Activated CD8-positive, alpha-beta T cell treated with anti-CD3 and anti-CD28 coated beads for 36 hours (primary cell): ENCODE measurements at regions of chr6 and their contacts with region 1.

Region 1: GRCh38 chr6:134174672-134175198 is 122.3 kb upstream of the SLC2A12 start:
- DNase-seq: peak; percentile 94
- ATAC-seq: peak; percentile 81
- H3K4me3 Mint-ChIP-seq: peak overlapping the region; percentile 98
- H3K27ac Mint-ChIP-seq: peak overlapping the region; percentile 98
- H3K4me1 Mint-ChIP-seq: peaks cover 64% of the 10 kb centered on the region
- H3K27me3 Mint-ChIP-seq: no peaks in the 10 kb centered on the region
- CTCF ChIP-seq: no peak

Region 2: DNA sequence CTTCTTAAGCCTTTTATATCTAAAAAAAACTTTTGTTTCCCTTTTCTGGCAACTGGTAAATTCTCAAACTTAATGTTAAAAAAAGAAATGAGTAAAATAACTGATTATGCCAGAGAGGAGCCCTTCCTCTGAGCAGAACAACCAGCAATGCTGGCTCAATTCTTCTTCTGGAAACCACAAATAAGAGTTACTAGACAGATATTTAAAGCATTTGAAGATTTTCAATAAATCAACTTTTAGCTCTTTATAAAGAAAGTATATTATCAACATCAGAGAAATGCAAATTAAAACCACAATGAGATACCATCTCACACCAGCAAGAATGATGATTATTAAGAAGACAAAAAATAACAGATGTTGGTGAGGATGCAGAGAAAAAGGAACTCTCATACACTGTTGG is 347.0 kb before region 1 on chr6:
- CTCF ChIA-PET with region 1: no interaction called
- POLR2A ChIA-PET with region 1: no interaction called
- intact Hi-C with region 1: no loop called
- DNase-seq: no peak
- ATAC-seq: no peak
- H3K4me3 Mint-ChIP-seq: no peak overlapping the region
- H3K27ac Mint-ChIP-seq: no peak overlapping the region
- H3K4me1 Mint-ChIP-seq: no peaks in the 10 kb centered on the region
- H3K27me3 Mint-ChIP-seq: peaks cover 17% of the 10 kb centered on the region
- CTCF ChIP-seq: no peak

Region 3: GRCh38 chr6:134195164-134195906 is 20.6 kb after region 1 on chr6:
- CTCF ChIA-PET with region 1: interaction called, 21 read pairs
- POLR2A ChIA-PET with region 1: no interaction called
- intact Hi-C with region 1: no loop called
- DNase-seq: no peak
- ATAC-seq: no peak
- H3K4me3 Mint-ChIP-seq: no peak overlapping the region
- H3K27ac Mint-ChIP-seq: no peak overlapping the region
- H3K4me1 Mint-ChIP-seq: peaks cover 18% of the 10 kb centered on the region
- H3K27me3 Mint-ChIP-seq: no peaks in the 10 kb centered on the region
- CTCF ChIP-seq: no peak

Region 4: DNA sequence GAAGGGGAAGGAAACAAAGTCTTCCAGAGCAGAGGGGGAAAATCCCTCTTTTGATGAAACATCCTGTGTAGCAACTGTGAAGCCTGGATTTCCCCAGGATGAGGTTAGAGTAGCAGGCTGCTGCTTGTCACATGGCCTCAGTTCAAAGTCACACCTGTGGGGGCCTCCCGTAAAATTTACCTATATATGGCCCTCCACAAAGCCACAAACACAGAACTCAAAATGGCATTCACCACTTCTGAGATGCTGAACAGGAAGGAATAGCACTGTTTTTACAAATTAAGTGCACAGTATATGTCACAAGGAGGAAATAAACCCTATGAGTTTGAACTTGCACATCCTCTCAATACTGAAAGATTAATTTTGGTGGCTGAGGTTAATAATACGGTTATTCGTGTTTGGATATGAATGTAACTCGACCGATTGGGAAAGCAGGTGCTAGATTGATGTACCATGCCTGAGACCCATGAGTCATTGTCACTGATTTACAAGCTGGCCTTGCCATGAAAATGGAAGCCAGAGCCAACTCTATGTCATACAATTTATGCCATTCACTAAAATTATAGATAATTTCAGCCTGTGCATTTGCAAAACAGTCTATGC is 72.6 kb after region 1 on chr6:
- CTCF ChIA-PET with region 1: interaction called, 5 read pairs
- POLR2A ChIA-PET with region 1: interaction called, 8 read pairs
- intact Hi-C with region 1: loop called (anchors 2 kb)
- DNase-seq: peak; percentile 92
- ATAC-seq: peak; percentile 88
- H3K4me3 Mint-ChIP-seq: no peak overlapping the region
- H3K27ac Mint-ChIP-seq: peak overlapping the region; percentile 97
- H3K4me1 Mint-ChIP-seq: peaks cover 56% of the 10 kb centered on the region
- H3K27me3 Mint-ChIP-seq: no peaks in the 10 kb centered on the region
- CTCF ChIP-seq: no peak

Region 5: DNA sequence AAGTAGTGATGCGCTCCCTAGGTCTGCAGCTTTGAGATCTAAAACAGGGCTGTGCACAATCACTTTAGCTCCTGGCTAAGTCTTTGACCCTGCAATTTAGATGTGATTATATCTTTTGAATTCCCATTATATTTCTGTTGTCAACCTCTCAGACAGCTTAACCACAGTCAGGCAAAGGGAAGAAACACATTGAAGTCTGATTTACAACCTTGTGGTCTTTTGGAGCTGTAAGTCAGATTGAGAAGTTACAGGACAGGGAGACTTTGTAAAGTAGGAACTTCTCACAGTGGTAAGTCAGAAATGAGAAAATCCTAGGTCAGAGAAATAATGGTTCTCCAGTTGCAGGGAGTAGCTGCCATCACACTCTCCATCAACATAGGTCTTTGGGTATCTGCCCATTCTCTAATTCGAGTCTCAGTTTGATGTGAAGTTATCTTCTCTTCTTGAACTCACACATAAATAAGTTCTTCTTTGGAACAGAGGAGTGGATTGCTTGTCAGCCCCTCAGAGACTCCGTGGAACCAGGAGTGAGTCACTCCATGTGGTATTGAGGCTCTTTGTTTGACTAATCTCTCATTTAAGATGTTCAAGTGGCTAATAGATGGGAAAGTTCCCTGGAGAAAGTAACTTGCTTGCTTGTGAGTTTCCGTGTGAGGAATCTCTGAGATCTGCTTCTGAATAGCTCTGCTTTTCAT is 178.2 kb after region 1 on chr6:
- CTCF ChIA-PET with region 1: interaction called, 11 read pairs
- POLR2A ChIA-PET with region 1: interaction called, 6 read pairs
- intact Hi-C with region 1: loop called (anchors 10 kb)
- DNase-seq: peak; percentile 48
- ATAC-seq: peak; percentile 74
- H3K4me3 Mint-ChIP-seq: no peak overlapping the region
- H3K27ac Mint-ChIP-seq: no peak overlapping the region
- H3K4me1 Mint-ChIP-seq: peaks cover 28% of the 10 kb centered on the region
- H3K27me3 Mint-ChIP-seq: no peaks in the 10 kb centered on the region
- CTCF ChIP-seq: no peak

Region 6: GRCh38 chr6:134529921-134530320 is 355.2 kb after region 1 on chr6:
- CTCF ChIA-PET with region 1: interaction called, 3 read pairs
- POLR2A ChIA-PET with region 1: no interaction called
- intact Hi-C with region 1: loop called (anchors 10 kb)
- DNase-seq: no peak
- ATAC-seq: no peak
- H3K4me3 Mint-ChIP-seq: no peak overlapping the region
- H3K27ac Mint-ChIP-seq: no peak overlapping the region
- H3K4me1 Mint-ChIP-seq: peaks cover 29% of the 10 kb centered on the region
- H3K27me3 Mint-ChIP-seq: no peaks in the 10 kb centered on the region
- CTCF ChIP-seq: no peak

Region 7: DNA sequence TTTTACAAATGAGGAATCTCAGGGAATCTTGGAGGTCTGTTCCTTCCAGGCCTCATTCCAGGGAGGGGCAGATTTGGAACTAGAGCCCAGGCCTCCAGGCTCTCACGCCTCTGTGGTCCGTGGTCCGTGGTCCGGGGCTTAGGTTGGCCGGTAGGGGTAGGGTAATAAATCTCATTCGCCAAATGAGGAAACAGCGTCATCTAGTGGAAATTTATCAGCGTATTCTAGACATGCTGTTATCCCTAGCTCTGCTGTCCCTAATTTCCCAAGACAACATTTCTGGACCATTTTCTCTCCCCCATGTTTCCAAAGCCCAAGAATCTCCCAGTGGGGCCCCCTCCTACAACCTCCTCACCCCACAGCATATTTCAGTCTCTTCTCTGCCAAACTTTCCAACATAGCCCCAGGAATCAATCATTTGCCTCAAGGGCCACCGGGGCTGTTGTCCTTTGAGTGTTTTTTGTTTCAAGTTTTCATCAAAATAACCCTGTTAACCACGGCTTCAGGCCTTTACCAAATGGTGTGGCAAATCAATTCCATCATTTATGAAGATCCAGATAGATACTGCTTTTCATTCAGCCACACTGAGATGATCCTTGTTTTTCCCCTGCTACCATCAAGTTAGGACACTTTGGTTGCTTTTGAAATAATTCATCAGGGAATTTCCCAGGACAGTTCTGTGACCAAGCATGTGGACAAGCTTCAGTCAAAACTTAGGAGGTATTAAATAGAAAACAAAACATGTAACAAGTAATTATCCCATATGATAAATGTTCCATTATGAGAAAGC is 648.4 kb after region 1 on chr6:
- CTCF ChIA-PET with region 1: interaction called, 13 read pairs
- POLR2A ChIA-PET with region 1: no interaction called
- intact Hi-C with region 1: loop called (anchors 1 kb)
- DNase-seq: peak; percentile 51
- ATAC-seq: peak; percentile 90
- H3K4me3 Mint-ChIP-seq: no peak overlapping the region
- H3K27ac Mint-ChIP-seq: no peak overlapping the region
- H3K4me1 Mint-ChIP-seq: no peaks in the 10 kb centered on the region
- H3K27me3 Mint-ChIP-seq: peaks cover 3% of the 10 kb centered on the region
- CTCF ChIP-seq: peak; percentile 93